ENCODE measurements at regions of chr7 and their contacts with region 1.

Region 1: GRCh38 chr7:30612658-30613265 is 18.1 kb downstream of the GARS1 start:
- DNase-seq: peak; percentile 17
- H3K4me3 ChIP-seq: no peak overlapping the region
- H3K27ac ChIP-seq: peak overlapping the region; percentile 44
- H3K4me1 ChIP-seq: peaks cover 11% of the 10 kb centered on the region
- H3K27me3 ChIP-seq: no peaks in the 10 kb centered on the region
- CTCF ChIP-seq: no peak
- POLR2A ChIP-seq: no peak

Region 2: DNA sequence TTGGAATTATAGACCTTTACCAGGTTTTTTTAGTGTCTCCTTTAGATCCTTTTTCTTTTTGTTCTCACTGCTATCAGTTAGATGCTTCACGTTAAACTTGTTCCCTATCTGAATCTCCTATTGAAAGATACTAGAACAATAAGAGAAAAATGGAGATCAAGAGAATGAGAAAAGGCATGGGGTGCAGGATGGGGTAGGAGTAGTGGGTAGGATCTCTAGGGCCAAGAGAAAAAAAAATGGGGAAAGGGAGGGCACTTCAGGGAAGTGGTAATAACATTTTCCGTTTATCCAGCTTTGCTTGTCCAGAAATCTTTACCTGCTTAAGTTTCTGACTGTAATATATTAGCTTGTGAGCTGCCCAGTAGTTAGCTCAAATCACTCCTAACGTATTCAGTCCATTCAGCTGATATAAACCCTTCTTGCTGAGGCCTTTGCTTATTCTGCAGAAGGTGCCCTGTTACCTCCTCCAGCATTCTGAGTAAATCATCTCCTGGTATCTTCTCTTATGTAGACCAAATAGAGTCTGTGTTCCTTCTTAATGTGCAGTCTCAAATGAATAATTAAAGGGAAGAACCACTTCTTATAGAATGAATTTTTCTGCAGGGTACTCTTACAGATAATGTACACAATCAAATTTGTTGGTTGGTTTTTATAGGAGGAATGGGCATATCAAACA is 258.7 kb before region 1 on chr7:
- CTCF ChIA-PET with region 1: no interaction called
- POLR2A ChIA-PET with region 1: no interaction called
- dilution Hi-C with region 1: no loop called
- intact Hi-C with region 1: no loop called
- DNase-seq: no peak
- H3K4me3 ChIP-seq: no peak overlapping the region
- H3K27ac ChIP-seq: no peak overlapping the region
- H3K4me1 ChIP-seq: no peaks in the 10 kb centered on the region
- H3K27me3 ChIP-seq: no peaks in the 10 kb centered on the region
- CTCF ChIP-seq: no peak
- POLR2A ChIP-seq: no peak

Region 3: GRCh38 chr7:30598121-30598876 is 14.5 kb before region 1 on chr7:
- CTCF ChIA-PET with region 1: no interaction called
- POLR2A ChIA-PET with region 1: no interaction called
- dilution Hi-C with region 1: no loop called
- intact Hi-C with region 1: no loop called
- DNase-seq: no peak
- H3K4me3 ChIP-seq: no peak overlapping the region
- H3K27ac ChIP-seq: no peak overlapping the region
- H3K4me1 ChIP-seq: peaks cover 21% of the 10 kb centered on the region
- H3K27me3 ChIP-seq: no peaks in the 10 kb centered on the region
- CTCF ChIP-seq: no peak
- POLR2A ChIP-seq: no peak

Region 4: DNA sequence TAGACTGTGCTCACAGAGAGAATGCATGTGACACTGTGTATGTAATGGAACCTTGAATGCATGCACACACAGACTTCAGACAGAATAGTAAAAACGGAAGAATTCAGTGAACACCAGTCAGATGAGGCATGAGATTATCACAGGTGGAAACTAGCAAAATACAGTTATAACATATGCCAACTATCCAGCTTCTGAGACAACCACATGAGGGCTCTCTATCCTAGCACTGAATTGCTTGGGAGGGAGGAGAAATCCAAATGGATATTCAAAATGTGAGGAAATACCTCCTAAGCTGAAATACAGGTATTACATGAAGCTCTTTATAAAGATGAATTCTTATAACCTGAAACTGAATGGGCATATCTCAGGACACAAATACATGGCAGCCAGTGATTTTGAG is 12.5 kb after region 1 on chr7:
- CTCF ChIA-PET with region 1: no interaction called
- POLR2A ChIA-PET with region 1: no interaction called
- dilution Hi-C with region 1: no loop called
- intact Hi-C with region 1: loop called (anchors 2 kb)
- DNase-seq: no peak
- H3K4me3 ChIP-seq: no peak overlapping the region
- H3K27ac ChIP-seq: no peak overlapping the region
- H3K4me1 ChIP-seq: no peaks in the 10 kb centered on the region
- H3K27me3 ChIP-seq: no peaks in the 10 kb centered on the region
- CTCF ChIP-seq: no peak
- POLR2A ChIP-seq: no peak

Measured in endothelial cell of umbilical vein (primary cell).